Thyroid gland (tissue), 4 donors: ENCODE measurements at regions of chr14 and their contacts with region 1.

Region 1: DNA sequence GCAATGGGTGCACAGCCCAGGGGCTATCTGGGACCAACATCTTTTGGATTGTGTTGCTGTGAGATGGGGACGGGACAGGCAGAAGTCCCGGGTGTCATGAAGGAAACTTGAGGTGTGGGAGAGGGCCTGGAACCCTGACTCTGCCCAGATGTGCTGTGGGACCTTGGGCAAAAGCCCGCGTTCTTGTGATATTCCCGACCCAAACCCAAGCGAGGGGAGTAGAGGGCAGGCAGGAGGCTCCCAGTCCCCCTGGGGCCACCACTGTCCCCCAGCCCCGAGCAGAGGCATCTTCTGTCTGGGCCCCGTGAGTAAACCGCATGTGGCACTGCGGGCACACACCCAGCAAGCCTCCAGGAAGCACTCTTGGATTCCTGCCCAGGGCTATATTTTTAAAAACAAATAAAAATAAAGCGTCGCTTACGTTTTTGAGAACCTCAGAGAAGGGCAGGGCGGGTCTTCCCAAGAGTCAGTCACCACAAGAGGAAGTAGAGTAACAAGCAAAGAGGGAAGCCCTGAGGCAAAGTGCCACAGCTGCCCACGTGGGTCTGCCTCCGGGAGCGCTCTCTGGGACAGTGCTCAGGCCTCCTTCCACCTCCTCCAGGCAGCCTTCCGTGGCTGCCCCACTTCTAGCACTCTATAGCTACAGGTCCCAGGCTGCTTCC is 39.5 kb downstream of the BEGAIN start:
- DNase-seq: no peak
- H3K4me3 ChIP-seq: no peak overlapping the region
- H3K27ac ChIP-seq: peak overlapping the region in 1 of 3 donors; percentile 10
- H3K4me1 ChIP-seq: peaks cover 0 to 15% of the 10 kb centered on the region in 2 donors
- H3K27me3 ChIP-seq: no peaks in the 10 kb centered on the region
- CTCF ChIP-seq: no peak
- POLR2A ChIP-seq: no peak

Region 2: GRCh38 chr14:99683619-99684355 is 864.0 kb before region 1 on chr14 and contains the start of gene CYP46A1:
- intact Hi-C with region 1: loop called (anchors 10 kb)
- DNase-seq: peak; percentile 100
- H3K4me3 ChIP-seq: peak within 1 kb of the TSS; percentile 54 to 81 (median 68)
- H3K27ac ChIP-seq: peak within 1 kb of the TSS in 2 of 3 donors; percentile 30 to 67
- H3K4me1 ChIP-seq: peaks cover 11 to 15% of the 10 kb centered on the region in 2 donors
- H3K27me3 ChIP-seq: no peaks in the 10 kb centered on the region
- CTCF ChIP-seq: no peak
- POLR2A ChIP-seq: no peak
- total RNA-seq, gene CYP46A1: 0.54 to 5.2 (median 1.5) TPM

Region 3: GRCh38 chr14:99891900-99892299 is 655.9 kb before region 1 on chr14:
- intact Hi-C with region 1: no loop called
- DNase-seq: peak; percentile 39 to 42
- H3K4me3 ChIP-seq: no peak overlapping the region
- H3K27ac ChIP-seq: no peak overlapping the region
- H3K4me1 ChIP-seq: no peaks in the 10 kb centered on the region
- H3K27me3 ChIP-seq: no peaks in the 10 kb centered on the region
- CTCF ChIP-seq: no peak
- POLR2A ChIP-seq: no peak

Region 4: GRCh38 chr14:100417466-100417865 is 130.3 kb before region 1 on chr14:
- intact Hi-C with region 1: no loop called
- DNase-seq: no peak
- H3K4me3 ChIP-seq: no peak overlapping the region
- H3K27ac ChIP-seq: no peak overlapping the region
- H3K4me1 ChIP-seq: no peaks in the 10 kb centered on the region
- H3K27me3 ChIP-seq: no peaks in the 10 kb centered on the region
- CTCF ChIP-seq: peak in 1 of 6 experiments; percentile 16
- POLR2A ChIP-seq: no peak